ENCODE measurements at regions of chr22 and their contacts with region 1.

Region 1: DNA sequence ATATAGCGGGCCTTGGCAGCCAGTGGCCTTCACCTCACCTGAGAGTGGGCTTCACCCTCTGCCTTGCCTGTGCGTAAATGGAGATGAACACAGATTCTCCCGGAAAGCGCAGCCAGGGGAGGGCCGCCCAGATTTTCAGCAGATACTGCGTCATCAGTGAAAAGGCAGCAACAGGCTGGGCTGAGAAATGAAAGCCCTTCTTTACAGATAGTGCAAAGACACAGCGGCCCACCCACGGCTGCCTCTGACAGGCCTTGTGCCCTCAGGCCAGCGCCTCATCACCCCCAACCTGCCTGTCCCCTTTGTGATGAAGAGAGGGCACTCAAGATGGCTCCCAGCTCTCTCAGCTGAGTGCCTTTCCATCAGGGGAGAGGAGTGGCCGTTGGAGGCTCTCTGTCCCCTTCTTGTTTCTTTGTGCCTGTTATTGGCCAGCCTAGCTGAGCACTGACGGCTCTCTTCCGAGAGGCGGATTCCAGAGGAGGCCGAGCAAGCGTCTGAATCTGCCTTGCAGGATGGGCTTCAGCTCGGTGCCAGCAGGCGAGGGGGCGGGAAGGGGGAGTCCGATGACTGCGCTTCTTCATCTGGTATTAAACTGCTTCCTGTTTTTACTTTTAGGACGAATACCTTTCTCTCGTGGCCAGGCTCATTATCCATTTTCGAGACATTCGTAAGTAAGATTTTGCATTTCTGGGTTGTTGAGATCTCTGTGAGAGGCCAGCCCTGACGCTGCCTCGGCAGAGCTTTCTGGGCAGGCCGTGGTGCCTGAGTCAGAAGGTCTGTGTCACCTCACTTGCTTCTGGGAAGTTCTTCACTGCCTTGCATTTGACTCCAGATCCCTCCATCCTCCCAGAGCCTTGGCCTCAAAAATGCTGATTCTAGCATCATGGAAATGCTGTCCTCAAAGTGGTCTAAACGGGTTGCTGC is 43.7 kb downstream of the MED15 start:
- DNase-seq: peak in 1 of 2 donors; percentile 56
- ATAC-seq: no peak
- H3K4me3 ChIP-seq: no peak overlapping the region
- H3K27ac ChIP-seq: peak overlapping the region; percentile 95 to 98 (median 97)
- H3K4me1 ChIP-seq: peaks cover 76 to 89% of the 10 kb centered on the region in 2 donors
- H3K27me3 ChIP-seq: no peaks in the 10 kb centered on the region
- CTCF ChIP-seq: no peak
- POLR2A ChIP-seq: no peak

Region 2: GRCh38 chr22:20514658-20515406 is 36.3 kb before region 1 on chr22:
- in situ Hi-C with region 1: no loop called
- intact Hi-C with region 1: loop called (anchors 2 kb)
- DNase-seq: peak; percentile 69 to 92
- ATAC-seq: peak; percentile 95 to 97
- H3K4me3 ChIP-seq: no peak overlapping the region
- H3K27ac ChIP-seq: peak overlapping the region; percentile 60 to 78 (median 74)
- H3K4me1 ChIP-seq: peaks cover 40 to 45% of the 10 kb centered on the region in 2 donors
- H3K27me3 ChIP-seq: no peaks in the 10 kb centered on the region
- CTCF ChIP-seq: no peak
- POLR2A ChIP-seq: peak in 1 of 2 donors; percentile 30

Region 3: GRCh38 chr22:20531315-20532201 is 19.5 kb before region 1 on chr22:
- in situ Hi-C with region 1: no loop called
- intact Hi-C with region 1: loop called (anchors 2 kb)
- DNase-seq: peak; percentile 70 to 84
- ATAC-seq: peak; percentile 83 to 89
- H3K4me3 ChIP-seq: peak overlapping the region in 1 of 4 donors; percentile 15
- H3K27ac ChIP-seq: peak overlapping the region; percentile 85 to 92 (median 89)
- H3K4me1 ChIP-seq: peaks cover 37 to 47% of the 10 kb centered on the region in 2 donors
- H3K27me3 ChIP-seq: no peaks in the 10 kb centered on the region
- CTCF ChIP-seq: no peak
- POLR2A ChIP-seq: peak; percentile 26 to 31